Testis (tissue), 5 donors: ENCODE measurements at regions of chr1 and their contacts with region 1.

Region 1: DNA sequence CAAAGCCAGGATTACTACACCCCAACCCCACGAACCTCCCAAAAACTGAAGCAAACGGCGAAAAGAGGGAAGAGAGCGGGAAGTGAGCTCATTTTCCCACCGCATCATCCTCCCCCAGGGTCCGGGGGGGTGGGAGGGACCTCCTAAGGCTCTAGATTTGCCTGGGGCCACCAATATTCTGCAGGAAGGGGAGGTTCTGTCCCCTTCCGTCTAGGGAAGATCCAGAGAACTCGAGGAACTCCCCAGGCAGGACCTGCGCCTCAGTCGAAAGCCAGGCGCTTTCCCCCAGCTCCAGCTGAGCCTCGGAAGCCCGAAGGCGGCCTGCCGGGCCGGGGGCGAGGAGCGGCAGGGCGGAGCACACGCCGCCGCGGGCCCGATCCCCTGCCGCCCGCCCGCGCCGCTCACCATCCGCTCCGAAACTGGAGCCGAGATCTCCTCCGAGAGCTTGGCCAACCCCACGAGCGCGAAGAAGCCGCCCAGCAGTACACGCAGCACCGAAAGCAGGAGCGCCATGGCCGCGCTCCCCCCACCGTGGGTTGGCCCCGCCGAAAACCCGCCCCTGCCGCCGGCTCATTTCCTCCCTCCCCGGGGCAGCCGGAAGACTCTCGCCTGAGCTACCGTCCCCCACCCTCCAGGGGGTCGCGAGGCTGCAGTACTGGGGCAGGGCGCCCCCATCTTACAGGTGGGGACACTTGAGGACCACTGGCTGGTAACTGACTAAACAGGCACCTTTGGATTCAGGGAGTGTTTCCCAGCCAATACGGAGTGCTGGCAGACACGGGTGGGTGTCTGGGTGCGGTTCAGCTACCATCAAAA is at the start of gene TMEM35B:
- DNase-seq: peak; percentile 75
- H3K4me3 ChIP-seq: peak within 1 kb of the TSS; percentile 69 to 84
- H3K27ac ChIP-seq: peak within 1 kb of the TSS; percentile 89 to 96
- H3K4me1 ChIP-seq: peaks cover 12% of the 10 kb centered on the region
- H3K27me3 ChIP-seq: no peaks in the 10 kb centered on the region
- CTCF ChIP-seq: peak in 1 of 3 experiments; percentile 13
- POLR2A ChIP-seq: no peak
- total RNA-seq, gene TMEM35B: 43.5 to 54.8 TPM

Region 2: DNA sequence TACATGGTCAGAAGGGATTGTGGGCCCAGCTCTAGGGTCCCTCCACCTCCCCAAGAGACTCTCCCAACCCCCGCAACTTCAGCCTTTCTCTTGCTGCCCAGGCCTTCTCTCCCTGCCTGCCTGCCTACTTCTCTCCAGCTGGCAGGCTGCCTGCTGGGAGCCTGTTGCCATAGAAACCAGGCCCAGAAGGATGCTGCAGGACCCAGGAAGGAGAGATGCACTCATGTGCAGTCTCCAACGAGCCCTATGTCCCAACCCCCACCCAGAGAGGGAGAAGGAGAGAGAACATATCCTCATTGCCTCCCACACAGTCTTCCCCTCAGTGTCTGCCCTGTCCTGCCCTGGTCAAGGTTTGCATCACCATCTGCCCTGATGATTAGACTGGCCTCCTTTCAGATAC is 114.6 kb before region 1 on chr1:
- intact Hi-C with region 1: loop called (anchors 10 kb)
- DNase-seq: no peak
- H3K4me3 ChIP-seq: no peak overlapping the region
- H3K27ac ChIP-seq: no peak overlapping the region
- H3K4me1 ChIP-seq: peaks cover 4% of the 10 kb centered on the region
- H3K27me3 ChIP-seq: no peaks in the 10 kb centered on the region
- CTCF ChIP-seq: no peak
- POLR2A ChIP-seq: no peak